Spleen (tissue), 13 donors: ENCODE measurements at regions of chr4 and their contacts with region 1.

Region 1: DNA sequence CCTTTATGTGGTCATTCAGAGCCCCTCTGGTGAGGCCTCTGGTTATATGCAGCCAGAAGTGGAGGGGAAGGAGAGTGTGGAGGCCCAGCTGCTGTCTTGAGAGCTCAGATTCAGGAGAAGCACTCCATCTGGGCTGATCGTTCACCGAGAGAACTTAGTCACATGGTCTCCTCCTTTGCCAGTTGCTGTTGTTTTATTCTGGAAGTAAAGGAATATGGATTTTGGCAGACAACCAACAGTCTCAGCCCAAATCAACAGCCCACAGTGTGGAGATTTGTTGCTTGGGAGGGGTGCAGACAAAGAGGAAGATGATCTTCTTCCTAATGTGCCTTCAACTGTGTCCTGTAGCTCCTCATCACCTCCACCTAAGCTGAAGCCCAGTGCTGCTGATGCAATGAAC is 355.4 kb downstream of the ANK2 start:
- DNase-seq: no peak
- H3K4me3 ChIP-seq: no peak overlapping the region
- H3K27ac ChIP-seq: no peak overlapping the region
- H3K4me1 ChIP-seq: no peaks in the 10 kb centered on the region
- H3K27me3 ChIP-seq: no peaks in the 10 kb centered on the region
- CTCF ChIP-seq: no peak
- POLR2A ChIP-seq: no peak

Region 2: GRCh38 chr4:114077610-114078009 is 672.8 kb after region 1 on chr4:
- intact Hi-C with region 1: loop called (anchors 10 kb)
- DNase-seq: no peak
- H3K4me3 ChIP-seq: no peak overlapping the region
- H3K27ac ChIP-seq: no peak overlapping the region
- H3K4me1 ChIP-seq: no peaks in the 10 kb centered on the region
- H3K27me3 ChIP-seq: no peaks in the 10 kb centered on the region
- CTCF ChIP-seq: no peak
- POLR2A ChIP-seq: no peak